CD8-positive, alpha-beta T cell (primary cell): ENCODE measurements at regions of chr12 and their contacts with region 1.

Region 1: GRCh38 chr12:125049093-125049458 is 16.2 kb upstream of the AACS start:
- DNase-seq: no peak
- ATAC-seq: no peak
- H3K4me3 ChIP-seq: peak overlapping the region; percentile 75 to 99
- H3K4me3 Mint-ChIP-seq: peak overlapping the region; percentile 86
- H3K27ac ChIP-seq: peak overlapping the region; percentile 43 to 71
- H3K27ac Mint-ChIP-seq: peak overlapping the region; percentile 83
- H3K4me1 ChIP-seq: no peaks in the 10 kb centered on the region
- H3K4me1 Mint-ChIP-seq: peaks cover 8% of the 10 kb centered on the region
- H3K27me3 ChIP-seq: no peaks in the 10 kb centered on the region
- H3K27me3 Mint-ChIP-seq: no peaks in the 10 kb centered on the region
- CTCF ChIP-seq: no peak

Region 2: DNA sequence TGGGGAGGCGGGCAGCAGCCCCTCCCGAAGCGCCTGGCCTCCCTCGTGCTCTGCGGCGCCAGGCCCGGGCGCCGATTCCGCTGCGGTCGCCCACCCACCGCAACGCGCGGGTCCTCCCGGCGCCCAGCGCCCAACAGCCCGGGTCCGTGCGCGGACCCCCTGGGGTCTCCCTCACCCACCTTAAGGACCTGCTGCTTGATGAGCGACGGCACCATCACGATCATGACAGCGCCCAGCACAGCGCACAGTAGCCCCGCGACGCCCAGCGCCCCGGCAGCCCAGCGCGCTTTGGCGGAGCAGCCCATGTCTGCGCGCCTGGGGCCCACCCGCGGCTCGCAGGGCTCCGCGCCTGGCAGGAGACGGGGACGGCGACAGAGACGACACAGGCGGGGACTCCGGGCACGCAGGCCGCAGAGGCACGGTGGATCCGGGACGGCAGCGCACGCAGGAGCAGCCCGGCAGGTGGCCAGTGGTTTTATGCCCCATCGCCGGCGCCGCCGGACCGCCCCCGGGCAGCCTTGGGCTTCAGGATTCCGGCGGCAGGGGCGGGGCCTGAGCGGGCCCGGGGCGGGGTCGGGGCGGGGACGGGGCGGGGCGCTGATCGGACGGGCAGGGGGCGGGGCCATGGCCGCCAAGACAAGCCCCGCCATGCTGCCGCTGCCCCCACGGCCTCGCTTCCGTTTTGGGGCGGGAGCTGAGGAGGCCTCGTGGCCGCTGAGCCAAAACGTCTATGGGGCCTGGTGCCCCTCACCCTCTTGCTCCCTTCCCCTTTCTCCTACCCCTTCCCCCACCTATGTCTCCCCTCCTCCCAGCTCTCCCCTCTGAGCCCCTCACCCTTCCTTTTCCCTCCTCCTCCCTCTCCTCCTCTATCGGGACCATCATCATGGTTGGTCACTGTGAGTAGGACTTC is 185.4 kb before region 1 on chr12 and contains the start of gene SCARB1:
- CTCF ChIA-PET with region 1: no interaction called
- POLR2A ChIA-PET with region 1: no interaction called
- intact Hi-C with region 1: loop called in 1 of 2 experiments (anchors 2 kb)
- DNase-seq: peak; percentile 63 to 89 (median 73)
- ATAC-seq: peak; percentile 94
- H3K4me3 ChIP-seq: peak within 1 kb of the TSS; percentile 46 to 81
- H3K4me3 Mint-ChIP-seq: peak within 1 kb of the TSS; percentile 81
- H3K27ac ChIP-seq: peak within 1 kb of the TSS; percentile 15 to 46
- H3K27ac Mint-ChIP-seq: peak within 1 kb of the TSS; percentile 57
- H3K4me1 ChIP-seq: peaks cover 15% of the 10 kb centered on the region
- H3K4me1 Mint-ChIP-seq: peaks cover 23% of the 10 kb centered on the region
- H3K27me3 ChIP-seq: no peaks in the 10 kb centered on the region
- H3K27me3 Mint-ChIP-seq: no peaks in the 10 kb centered on the region
- CTCF ChIP-seq: no peak
- total RNA-seq, gene SCARB1: 3.0 to 3.2 TPM

Region 3: GRCh38 chr12:124917135-124917840 is 131.8 kb before region 1 on chr12:
- CTCF ChIA-PET with region 1: no interaction called
- POLR2A ChIA-PET with region 1: interaction called, 6 read pairs
- intact Hi-C with region 1: loop called (anchors 2 to 5 kb)
- DNase-seq: peak; percentile 79 to 98 (median 91)
- ATAC-seq: peak; percentile 73
- H3K4me3 ChIP-seq: peak overlapping the region; percentile 31 to 40
- H3K4me3 Mint-ChIP-seq: peak overlapping the region; percentile 82
- H3K27ac ChIP-seq: peak overlapping the region; percentile 87 to 89
- H3K27ac Mint-ChIP-seq: peak overlapping the region; percentile 97
- H3K4me1 ChIP-seq: peaks cover 62% of the 10 kb centered on the region
- H3K4me1 Mint-ChIP-seq: peaks cover 87% of the 10 kb centered on the region
- H3K27me3 ChIP-seq: no peaks in the 10 kb centered on the region
- H3K27me3 Mint-ChIP-seq: no peaks in the 10 kb centered on the region
- CTCF ChIP-seq: no peak

Region 4: DNA sequence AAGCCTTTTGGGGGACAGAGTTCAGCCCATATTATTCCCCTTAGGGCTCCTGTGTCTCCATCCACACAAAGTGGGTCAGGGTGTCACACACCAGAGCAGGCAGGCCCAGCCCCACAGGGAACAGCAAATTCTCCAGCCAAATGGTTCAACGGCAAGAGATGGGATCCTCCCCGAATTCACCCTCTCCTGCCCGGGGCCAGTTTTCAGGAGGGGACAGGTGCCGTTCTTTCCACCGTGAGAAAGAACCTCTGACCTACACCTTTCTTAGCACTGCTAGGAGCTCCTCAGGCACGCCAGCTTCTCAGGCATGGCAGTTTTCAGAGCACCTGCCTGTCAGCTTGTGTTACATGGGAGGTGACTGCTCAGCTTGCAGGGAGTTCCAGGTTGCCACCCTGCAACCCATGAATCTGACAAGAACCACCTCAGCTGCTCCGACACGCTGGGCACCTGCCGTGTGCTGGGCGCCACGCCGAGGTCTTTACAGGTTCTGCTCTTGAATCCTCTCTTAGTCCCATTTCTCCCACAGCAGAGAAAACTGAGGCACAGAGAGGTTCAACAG is 42.8 kb before region 1 on chr12:
- CTCF ChIA-PET with region 1: no interaction called
- POLR2A ChIA-PET with region 1: no interaction called
- intact Hi-C with region 1: no loop called
- DNase-seq: no peak
- ATAC-seq: no peak
- H3K4me3 ChIP-seq: no peak overlapping the region
- H3K4me3 Mint-ChIP-seq: no peak overlapping the region
- H3K27ac ChIP-seq: no peak overlapping the region
- H3K27ac Mint-ChIP-seq: no peak overlapping the region
- H3K4me1 ChIP-seq: no peaks in the 10 kb centered on the region
- H3K4me1 Mint-ChIP-seq: no peaks in the 10 kb centered on the region
- H3K27me3 ChIP-seq: no peaks in the 10 kb centered on the region
- H3K27me3 Mint-ChIP-seq: no peaks in the 10 kb centered on the region
- CTCF ChIP-seq: no peak

Region 5: DNA sequence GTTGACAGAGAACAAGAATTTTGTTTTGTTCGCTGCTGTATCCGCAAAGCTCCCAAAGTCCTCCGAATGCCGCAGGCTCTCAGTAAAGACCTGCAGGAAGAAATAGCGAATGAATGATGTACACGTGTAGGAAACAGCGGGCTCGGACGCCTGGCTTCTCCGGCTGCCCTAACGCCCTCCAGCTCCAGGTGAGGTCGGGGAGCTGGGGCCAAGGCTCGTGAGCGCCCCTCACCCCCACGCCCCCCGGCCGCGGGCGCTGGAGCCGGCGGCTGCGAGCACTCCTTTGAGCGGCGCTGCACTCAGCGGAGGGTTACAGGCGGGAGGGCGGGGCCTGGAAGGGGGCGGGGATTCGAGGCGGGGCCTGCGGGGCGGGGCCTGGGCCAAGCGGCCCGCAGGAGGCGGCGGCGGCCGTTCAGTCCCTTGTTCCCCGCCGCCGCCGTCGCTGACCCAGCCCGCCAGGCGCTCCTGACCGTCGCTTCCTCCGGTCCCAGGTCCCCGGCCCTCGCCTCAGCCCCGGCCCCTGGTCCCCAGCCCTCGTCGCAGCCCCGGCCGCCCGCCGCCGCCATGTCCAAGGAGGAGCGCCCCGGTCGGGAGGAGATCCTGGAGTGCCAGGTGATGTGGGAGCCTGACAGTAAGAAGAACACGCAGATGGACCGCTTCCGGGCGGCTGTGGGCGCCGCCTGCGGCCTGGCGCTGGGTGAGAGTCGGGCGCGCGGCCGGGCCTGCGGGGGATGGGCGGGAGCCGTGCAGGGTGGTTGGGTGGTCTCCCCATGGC is 16.1 kb after region 1 on chr12 and contains the start of gene AACS:
- CTCF ChIA-PET with region 1: interaction called, 3 read pairs
- POLR2A ChIA-PET with region 1: interaction called, 13 read pairs
- intact Hi-C with region 1: loop called (anchors 1 kb)
- DNase-seq: peak; percentile 59 to 85 (median 74)
- ATAC-seq: peak; percentile 96
- H3K4me3 ChIP-seq: peak within 1 kb of the TSS; percentile 67 to 98
- H3K4me3 Mint-ChIP-seq: peak within 1 kb of the TSS; percentile 86
- H3K27ac ChIP-seq: peak within 1 kb of the TSS; percentile 25 to 33
- H3K27ac Mint-ChIP-seq: peak within 1 kb of the TSS; percentile 69
- H3K4me1 ChIP-seq: peaks cover 10% of the 10 kb centered on the region
- H3K4me1 Mint-ChIP-seq: peaks cover 21% of the 10 kb centered on the region
- H3K27me3 ChIP-seq: no peaks in the 10 kb centered on the region
- H3K27me3 Mint-ChIP-seq: peaks cover 1% of the 10 kb centered on the region
- CTCF ChIP-seq: no peak
- total RNA-seq, gene AACS: 11.0 to 12.3 TPM